ENCODE measurements at regions of chr3 and their contacts with region 1.

Region 1: DNA sequence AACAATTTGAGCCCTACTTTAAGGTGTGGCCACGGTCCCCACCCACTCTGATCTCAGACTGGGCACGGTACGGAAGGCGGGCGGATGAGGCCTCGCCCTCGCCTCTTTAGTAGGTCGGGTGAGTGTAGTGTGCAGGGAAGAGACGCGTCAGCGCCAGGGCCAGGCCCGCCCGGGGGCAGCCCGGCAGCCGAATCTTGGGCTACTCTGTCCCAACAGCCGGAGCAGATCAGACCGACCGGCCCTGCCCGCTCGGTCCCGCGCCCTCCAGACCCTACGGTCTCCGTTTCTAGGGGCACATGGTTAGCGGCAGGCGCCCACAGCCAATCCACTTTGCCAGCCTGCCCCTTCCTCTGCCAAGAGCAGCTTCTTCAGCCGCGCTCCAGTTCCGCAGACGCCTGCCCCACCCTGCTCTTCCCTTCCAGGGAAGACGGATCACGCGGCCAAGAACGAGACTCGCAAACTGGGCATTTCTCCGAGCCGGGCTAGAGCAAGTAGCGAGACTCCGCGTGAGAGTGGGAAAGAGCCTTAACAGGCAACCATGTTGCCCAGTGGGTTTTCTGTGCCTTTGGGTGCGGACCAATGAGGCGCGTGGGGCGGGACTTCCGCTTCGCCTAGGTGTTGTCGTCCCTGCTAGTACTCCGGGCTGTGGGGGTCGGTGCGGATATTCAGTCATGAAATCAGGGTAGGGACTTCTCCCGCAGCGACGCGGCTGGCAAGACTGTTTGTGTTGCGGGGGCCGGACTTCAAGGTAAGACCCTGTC is at the start of gene RNF13:
- DNase-seq: peak; percentile 89
- ATAC-seq: peak; percentile 97
- H3K4me3 ChIP-seq: peak within 1 kb of the TSS; percentile 74 to 93 (median 86)
- H3K27ac ChIP-seq: peak within 1 kb of the TSS; percentile 91
- H3K4me1 ChIP-seq: peaks cover 48% of the 10 kb centered on the region
- H3K27me3 ChIP-seq: no peaks in the 10 kb centered on the region; a peak in 1 of 5 replicates
- CTCF ChIP-seq: no peak
- EP300 ChIP-seq: no peak
- POLR2A ChIP-seq: peak; percentile 80 to 86
- RAD21 ChIP-seq: no peak
- total RNA-seq, gene RNF13: 28.1 and 46.0 TPM in 2 replicates

Region 2: GRCh38 chr3:149494022-149494758 is 318.6 kb before region 1 on chr3:
- CTCF ChIA-PET with region 1: interaction called, 9 read pairs
- POLR2A ChIA-PET with region 1: no interaction called
- in situ Hi-C with region 1: no loop called
- intact Hi-C with region 1: loop called (anchors 1 kb)
- DNase-seq: peak; percentile 64
- ATAC-seq: peak; percentile 88
- H3K4me3 ChIP-seq: peak overlapping the region; percentile 46 to 65 (median 62)
- H3K27ac ChIP-seq: peak overlapping the region; percentile 66
- H3K4me1 ChIP-seq: peaks cover 47% of the 10 kb centered on the region
- H3K27me3 ChIP-seq: no peaks in the 10 kb centered on the region
- CTCF ChIP-seq: peak; percentile 91
- EP300 ChIP-seq: no peak
- POLR2A ChIP-seq: no peak; a peak in 1 of 4 replicates
- RAD21 ChIP-seq: peak; percentile 70

Region 3: GRCh38 chr3:149752051-149752787 is 60.6 kb before region 1 on chr3 and contains the start of gene COMMD2:
- CTCF ChIA-PET with region 1: no interaction called
- POLR2A ChIA-PET with region 1: no interaction called
- in situ Hi-C with region 1: no loop called
- intact Hi-C with region 1: loop called (anchors 5 kb)
- DNase-seq: peak; percentile 90
- ATAC-seq: peak; percentile 100
- H3K4me3 ChIP-seq: peak within 1 kb of the TSS; percentile 88 to 99 (median 97)
- H3K27ac ChIP-seq: peak within 1 kb of the TSS; percentile 67
- H3K4me1 ChIP-seq: peaks cover 25% of the 10 kb centered on the region
- H3K27me3 ChIP-seq: no peaks in the 10 kb centered on the region; a peak in 1 of 5 replicates
- CTCF ChIP-seq: peak; percentile 70
- EP300 ChIP-seq: peak; percentile 29 to 60; a peak in 2 of 4 replicates
- POLR2A ChIP-seq: peak; percentile 79 to 89
- RAD21 ChIP-seq: no peak; the same call in 1 of the 2 replicates
- total RNA-seq, gene COMMD2: 57.6 and 73.2 TPM in 2 replicates

Region 4: GRCh38 chr3:149765762-149766334 is 46.9 kb before region 1 on chr3:
- CTCF ChIA-PET with region 1: interaction called, 21 read pairs
- POLR2A ChIA-PET with region 1: interaction called, 6 read pairs
- in situ Hi-C with region 1: loop called (anchors 5 kb)
- intact Hi-C with region 1: loop called (anchors 1 kb)
- DNase-seq: peak; percentile 27
- ATAC-seq: peak; percentile 66
- H3K4me3 ChIP-seq: no peak overlapping the region
- H3K27ac ChIP-seq: no peak overlapping the region
- H3K4me1 ChIP-seq: no peaks in the 10 kb centered on the region
- H3K27me3 ChIP-seq: peaks cover 1 to 10% of the 10 kb centered on the region in 2 experiments; a peak in 2 of 5 replicates
- CTCF ChIP-seq: peak; percentile 65
- EP300 ChIP-seq: no peak
- POLR2A ChIP-seq: no peak
- RAD21 ChIP-seq: no peak

Region 5: GRCh38 chr3:149843502-149843901 is 30.7 kb after region 1 on chr3:
- CTCF ChIA-PET with region 1: no interaction called
- POLR2A ChIA-PET with region 1: interaction called, 3 read pairs
- in situ Hi-C with region 1: no loop called
- intact Hi-C with region 1: loop called (anchors 2 kb)
- DNase-seq: peak; percentile 81
- ATAC-seq: peak; percentile 95
- H3K4me3 ChIP-seq: no peak overlapping the region
- H3K27ac ChIP-seq: peak overlapping the region; percentile 59
- H3K4me1 ChIP-seq: peaks cover 60% of the 10 kb centered on the region
- H3K27me3 ChIP-seq: no peaks in the 10 kb centered on the region
- CTCF ChIP-seq: no peak
- EP300 ChIP-seq: peak in 1 of 2 experiments; percentile 76; a peak in 2 of 4 replicates
- POLR2A ChIP-seq: no peak
- RAD21 ChIP-seq: no peak

Region 6: GRCh38 chr3:149860881-149861280 is 48.1 kb after region 1 on chr3:
- CTCF ChIA-PET with region 1: no interaction called
- POLR2A ChIA-PET with region 1: no interaction called
- in situ Hi-C with region 1: no loop called
- intact Hi-C with region 1: no loop called
- DNase-seq: no peak
- ATAC-seq: no peak
- H3K4me3 ChIP-seq: no peak overlapping the region
- H3K27ac ChIP-seq: no peak overlapping the region
- H3K4me1 ChIP-seq: no peaks in the 10 kb centered on the region
- H3K27me3 ChIP-seq: no peaks in the 10 kb centered on the region
- CTCF ChIP-seq: no peak
- EP300 ChIP-seq: no peak
- POLR2A ChIP-seq: no peak
- RAD21 ChIP-seq: no peak